ENCODE measurements at regions of chr6 and their contacts with region 1.

Region 1: GRCh38 chr6:46949632-46950280 is 28.0 kb upstream of the ADGRF5 start:
- DNase-seq: peak; percentile 50
- H3K4me3 ChIP-seq: no peak overlapping the region
- H3K27ac ChIP-seq: peak overlapping the region; percentile 98
- H3K4me1 ChIP-seq: peaks cover 44% of the 10 kb centered on the region
- H3K27me3 ChIP-seq: no peaks in the 10 kb centered on the region
- CTCF ChIP-seq: no peak
- POLR2A ChIP-seq: no peak

Region 2: GRCh38 chr6:46876126-46876525 is 73.6 kb before region 1 on chr6:
- CTCF ChIA-PET with region 1: interaction called, 4 read pairs
- POLR2A ChIA-PET with region 1: no interaction called
- dilution Hi-C with region 1: no loop called
- intact Hi-C with region 1: loop called (anchors 1 kb)
- DNase-seq: peak; percentile 97
- H3K4me3 ChIP-seq: no peak overlapping the region
- H3K27ac ChIP-seq: peak overlapping the region; percentile 53
- H3K4me1 ChIP-seq: peaks cover 18% of the 10 kb centered on the region
- H3K27me3 ChIP-seq: no peaks in the 10 kb centered on the region
- CTCF ChIP-seq: no peak
- POLR2A ChIP-seq: no peak

Region 3: GRCh38 chr6:46903175-46903574 is 46.6 kb before region 1 on chr6:
- CTCF ChIA-PET with region 1: no interaction called
- POLR2A ChIA-PET with region 1: no interaction called
- dilution Hi-C with region 1: no loop called
- intact Hi-C with region 1: loop called (anchors 1 kb)
- DNase-seq: no peak
- H3K4me3 ChIP-seq: no peak overlapping the region
- H3K27ac ChIP-seq: peak overlapping the region; percentile 2
- H3K4me1 ChIP-seq: peaks cover 35% of the 10 kb centered on the region
- H3K27me3 ChIP-seq: no peaks in the 10 kb centered on the region
- CTCF ChIP-seq: no peak
- POLR2A ChIP-seq: no peak

Region 4: DNA sequence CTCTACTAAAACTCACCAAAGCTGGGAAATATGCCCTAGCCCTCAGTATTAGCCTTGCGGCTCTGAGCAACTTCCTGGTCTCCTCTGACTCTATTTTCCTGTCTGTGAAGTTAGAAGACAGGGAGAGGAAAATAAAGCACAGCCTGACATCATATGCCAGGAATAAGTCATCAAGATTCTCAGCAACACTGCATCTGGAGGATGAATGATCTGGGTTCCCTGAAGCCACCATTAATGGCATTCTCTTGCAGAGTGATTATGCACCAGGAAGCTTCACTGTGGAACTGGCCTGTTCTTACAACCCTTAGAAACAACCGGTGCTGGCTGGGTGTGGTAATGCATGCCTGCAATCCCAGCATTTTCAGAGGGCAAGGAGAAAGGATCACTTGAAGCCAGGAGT is 40.4 kb before region 1 on chr6:
- CTCF ChIA-PET with region 1: interaction called, 3 read pairs
- POLR2A ChIA-PET with region 1: no interaction called
- dilution Hi-C with region 1: no loop called
- intact Hi-C with region 1: loop called (anchors 1 kb)
- DNase-seq: peak; percentile 93
- H3K4me3 ChIP-seq: no peak overlapping the region
- H3K27ac ChIP-seq: peak overlapping the region; percentile 88
- H3K4me1 ChIP-seq: peaks cover 32% of the 10 kb centered on the region
- H3K27me3 ChIP-seq: no peaks in the 10 kb centered on the region
- CTCF ChIP-seq: peak in 1 of 2 donors; percentile 3
- POLR2A ChIP-seq: no peak

Region 5: DNA sequence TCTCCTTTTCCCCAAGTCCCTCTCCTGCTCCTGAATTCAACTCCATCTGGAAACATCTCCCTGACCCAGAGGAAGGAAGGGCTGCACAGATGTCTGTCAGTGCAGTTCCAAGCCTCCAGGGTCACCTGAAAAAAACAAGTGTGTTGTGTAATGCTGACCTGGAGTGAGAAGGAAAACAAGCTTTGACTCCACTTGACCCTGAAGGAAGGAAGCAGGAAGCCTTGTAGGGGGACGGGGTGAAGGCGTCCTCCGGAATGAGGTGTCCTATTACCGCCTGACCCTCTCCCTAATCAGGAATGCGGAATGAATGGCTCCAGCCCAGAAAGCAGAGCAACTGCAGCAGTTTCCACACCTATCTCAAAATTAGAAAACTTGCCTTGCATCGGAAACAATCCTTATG is 14.1 kb before region 1 on chr6:
- CTCF ChIA-PET with region 1: interaction called, 4 read pairs
- POLR2A ChIA-PET with region 1: no interaction called
- dilution Hi-C with region 1: no loop called
- intact Hi-C with region 1: loop called (anchors 1 kb)
- DNase-seq: peak; percentile 85
- H3K4me3 ChIP-seq: no peak overlapping the region
- H3K27ac ChIP-seq: peak overlapping the region; percentile 3
- H3K4me1 ChIP-seq: peaks cover 17% of the 10 kb centered on the region
- H3K27me3 ChIP-seq: peaks cover 0 to 4% of the 10 kb centered on the region in 2 experiments
- CTCF ChIP-seq: no peak
- POLR2A ChIP-seq: peak; percentile 47

Region 6: DNA sequence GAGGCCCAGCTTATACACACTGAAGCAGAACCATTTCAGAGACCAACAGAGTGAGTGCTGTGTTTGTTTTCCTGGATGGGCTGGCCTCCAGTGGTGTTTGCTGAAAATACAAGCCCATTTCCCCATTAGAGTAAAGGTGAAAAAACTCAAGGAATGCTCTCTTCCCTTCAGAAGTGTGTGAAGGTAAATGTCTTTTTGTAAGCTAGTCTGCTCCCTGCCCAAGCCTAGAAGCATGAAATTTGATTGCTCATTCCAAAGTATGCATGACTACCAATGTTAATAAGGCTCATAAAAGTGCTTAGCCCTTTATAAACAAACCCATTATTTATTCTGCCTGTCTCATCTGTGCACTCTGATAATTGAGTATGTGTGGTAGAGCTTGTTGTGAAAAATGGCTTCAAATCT is 33.3 kb after region 1 on chr6:
- CTCF ChIA-PET with region 1: no interaction called
- POLR2A ChIA-PET with region 1: no interaction called
- dilution Hi-C with region 1: no loop called
- intact Hi-C with region 1: loop called (anchors 1 kb)
- DNase-seq: peak; percentile 27
- H3K4me3 ChIP-seq: no peak overlapping the region
- H3K27ac ChIP-seq: no peak overlapping the region
- H3K4me1 ChIP-seq: peaks cover 19% of the 10 kb centered on the region
- H3K27me3 ChIP-seq: no peaks in the 10 kb centered on the region
- CTCF ChIP-seq: no peak
- POLR2A ChIP-seq: no peak

Region 7: GRCh38 chr6:47134476-47135189 is 184.9 kb after region 1 on chr6:
- CTCF ChIA-PET with region 1: no interaction called
- POLR2A ChIA-PET with region 1: no interaction called
- dilution Hi-C with region 1: no loop called
- intact Hi-C with region 1: loop called (anchors 1 kb)
- DNase-seq: peak; percentile 92
- H3K4me3 ChIP-seq: peak overlapping the region in 1 of 3 experiments; percentile 34
- H3K27ac ChIP-seq: peak overlapping the region; percentile 94
- H3K4me1 ChIP-seq: peaks cover 26% of the 10 kb centered on the region
- H3K27me3 ChIP-seq: no peaks in the 10 kb centered on the region
- CTCF ChIP-seq: no peak
- POLR2A ChIP-seq: no peak

Measured in endothelial cell of umbilical vein (primary cell).